Naive thymus-derived CD4-positive, alpha-beta T cell (primary cell): ENCODE measurements at regions of chr4 and their contacts with region 1.

Region 1: GRCh38 chr4:88672987-88673386 is 24.6 kb downstream of the NAP1L5 start:
- DNase-seq: peak in 6 of 9 donors; percentile 11 to 52 (median 34)
- ATAC-seq: peak; percentile 64
- H3K4me3 ChIP-seq: no peak overlapping the region
- H3K4me3 Mint-ChIP-seq: no peak overlapping the region
- H3K27ac ChIP-seq: no peak overlapping the region
- H3K27ac Mint-ChIP-seq: peak overlapping the region in 5 of 9 donors; percentile 2 to 59 (median 54)
- H3K4me1 ChIP-seq: no peaks in the 10 kb centered on the region
- H3K4me1 Mint-ChIP-seq: peaks cover 0 to 8% (median 5%) of the 10 kb centered on the region in 7 donors
- H3K27me3 ChIP-seq: no peaks in the 10 kb centered on the region
- H3K27me3 Mint-ChIP-seq: no peaks in the 10 kb centered on the region

Region 2: GRCh38 chr4:88689877-88690276 is 16.9 kb after region 1 on chr4:
- CTCF ChIA-PET with region 1: interaction called, 3 read pairs
- POLR2A ChIA-PET with region 1: no interaction called
- intact Hi-C with region 1: loop called in 1 of 2 experiments (anchors 2 kb)
- DNase-seq: no peak
- ATAC-seq: no peak
- H3K4me3 ChIP-seq: no peak overlapping the region
- H3K4me3 Mint-ChIP-seq: no peak overlapping the region
- H3K27ac ChIP-seq: no peak overlapping the region
- H3K27ac Mint-ChIP-seq: no peak overlapping the region
- H3K4me1 ChIP-seq: no peaks in the 10 kb centered on the region
- H3K4me1 Mint-ChIP-seq: peaks cover 0 to 14% (median 3%) of the 10 kb centered on the region in 7 donors
- H3K27me3 ChIP-seq: no peaks in the 10 kb centered on the region
- H3K27me3 Mint-ChIP-seq: no peaks in the 10 kb centered on the region

Region 3: GRCh38 chr4:89029591-89029990 is 356.6 kb after region 1 on chr4:
- CTCF ChIA-PET with region 1: no interaction called
- POLR2A ChIA-PET with region 1: no interaction called
- intact Hi-C with region 1: loop called (anchors 1 to 2 kb)
- DNase-seq: peak in 7 of 9 donors; percentile 18 to 71 (median 51)
- ATAC-seq: peak; percentile 88
- H3K4me3 ChIP-seq: no peak overlapping the region
- H3K4me3 Mint-ChIP-seq: peak overlapping the region in 7 of 10 donors; percentile 10 to 47 (median 28)
- H3K27ac ChIP-seq: no peak overlapping the region
- H3K27ac Mint-ChIP-seq: peak overlapping the region in 7 of 9 donors; percentile 21 to 83 (median 54)
- H3K4me1 ChIP-seq: no peaks in the 10 kb centered on the region
- H3K4me1 Mint-ChIP-seq: peaks cover 0 to 8% (median 4%) of the 10 kb centered on the region in 7 donors
- H3K27me3 ChIP-seq: no peaks in the 10 kb centered on the region
- H3K27me3 Mint-ChIP-seq: peaks cover 0 to 11% (median 0%) of the 10 kb centered on the region in 5 donors